ENCODE measurements at regions of chr3 and their contacts with region 1.

Region 1: GRCh38 chr3:128503164-128503651 is 10.2 kb upstream of the GATA2 start:
- DNase-seq: no peak
- ATAC-seq: no peak

Region 2: GRCh38 chr3:128549283-128550112 is 46.3 kb after region 1 on chr3:
- intact Hi-C with region 1: no loop called
- DNase-seq: peak; percentile 91
- ATAC-seq: peak; percentile 80 to 92

Region 3: DNA sequence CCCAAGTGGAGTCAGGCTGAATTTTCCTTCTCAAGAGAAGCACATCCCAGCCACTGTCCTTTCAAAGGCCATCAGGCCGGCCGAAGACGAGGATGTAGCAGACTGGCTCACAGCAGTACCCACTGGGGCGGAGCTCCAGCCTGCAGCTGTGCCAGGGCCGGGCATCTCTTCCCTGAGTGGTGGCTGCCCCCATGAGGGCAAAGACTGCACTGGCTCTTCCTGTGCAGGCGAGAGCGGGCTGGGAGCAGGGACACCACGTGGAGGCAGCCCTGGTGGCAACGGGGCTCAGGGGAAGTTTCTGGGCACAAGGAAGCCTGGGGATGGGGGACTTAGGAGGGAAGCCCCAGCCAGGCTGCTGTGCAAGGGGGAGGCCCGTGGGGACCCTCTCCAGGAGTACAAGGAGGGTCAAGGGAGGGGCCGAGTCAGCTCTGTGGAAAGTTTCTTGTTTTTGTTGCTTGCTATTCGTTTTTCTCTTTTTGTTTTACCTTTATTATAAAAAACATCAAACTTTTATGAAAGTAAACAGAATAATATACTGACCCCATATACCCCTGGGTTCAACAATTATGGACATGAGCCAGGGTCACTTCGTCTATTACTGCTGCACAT is 81.3 kb after region 1 on chr3:
- intact Hi-C with region 1: loop called in 1 of 2 experiments (anchors 5 kb)
- DNase-seq: peak; percentile 87
- ATAC-seq: peak; percentile 99

Measured in left cardiac atrium (tissue), 4 donors.